ENCODE measurements at regions of chr10 and their contacts with region 1.

Region 1: DNA sequence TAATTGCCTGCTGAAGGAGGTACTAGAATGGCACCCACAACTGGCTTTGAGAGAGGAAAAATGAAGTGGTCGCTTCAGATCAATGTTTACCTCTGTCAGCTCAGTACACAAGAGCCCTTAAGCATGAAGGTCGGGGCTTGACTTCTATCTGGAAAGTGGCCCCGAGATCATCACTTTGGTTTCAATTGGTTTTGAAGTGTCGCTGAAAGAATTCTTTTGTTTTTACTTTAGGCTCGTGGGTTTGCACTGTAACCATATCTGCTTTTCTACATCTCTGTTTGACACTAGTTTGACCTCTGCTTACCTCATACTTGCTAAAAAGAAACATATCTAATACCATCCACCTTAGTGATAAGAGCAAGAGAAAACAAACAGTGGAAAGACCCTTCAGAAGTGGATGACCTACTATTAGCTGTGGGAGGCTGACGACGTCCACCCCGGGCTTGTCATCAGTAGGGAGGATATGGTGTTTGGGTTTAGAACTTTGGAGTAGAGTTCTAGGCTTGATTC is 361.8 kb downstream of the GATA3 start:
- DNase-seq: peak; percentile 29
- H3K4me3 Mint-ChIP-seq: no peak overlapping the region
- H3K27ac Mint-ChIP-seq: no peak overlapping the region
- H3K4me1 Mint-ChIP-seq: peaks cover 23% of the 10 kb centered on the region
- H3K27me3 Mint-ChIP-seq: peaks cover 2% of the 10 kb centered on the region

Region 2: DNA sequence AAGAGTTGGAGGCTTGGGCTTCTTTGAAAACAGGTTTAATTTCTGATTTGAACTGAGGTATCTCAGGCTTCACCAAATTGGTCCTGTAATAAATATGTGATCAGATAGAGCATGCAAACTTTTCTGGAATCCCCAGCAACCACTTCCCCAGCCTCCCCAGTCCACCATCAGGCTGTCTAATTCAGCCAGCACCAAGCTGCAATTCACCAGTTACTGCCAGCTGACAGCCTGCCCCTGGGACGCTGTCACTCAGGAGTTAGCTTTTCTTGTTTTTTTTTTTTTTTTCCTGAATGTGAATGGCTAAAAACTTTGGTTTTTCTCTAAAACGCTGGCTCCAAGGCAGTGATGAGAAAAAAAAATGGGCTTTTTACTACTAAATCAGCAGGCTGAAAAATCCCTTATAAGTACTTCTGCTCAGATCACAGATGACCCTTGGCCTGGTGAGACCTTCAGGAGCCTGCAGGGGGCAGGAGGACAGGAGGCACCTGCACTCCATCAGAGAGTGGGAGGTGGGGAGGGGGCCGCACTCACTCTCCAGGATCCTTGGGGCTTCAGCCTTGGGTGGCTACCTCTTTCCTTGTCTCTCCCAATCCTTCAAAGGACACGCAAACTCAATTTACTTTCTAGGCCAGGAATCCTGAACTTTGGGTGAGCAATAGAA is 12.4 kb before region 1 on chr10:
- CTCF ChIA-PET with region 1: interaction called, 11 read pairs
- POLR2A ChIA-PET with region 1: no interaction called
- DNase-seq: no peak
- H3K4me3 Mint-ChIP-seq: peak overlapping the region; percentile 72
- H3K27ac Mint-ChIP-seq: peak overlapping the region; percentile 89
- H3K4me1 Mint-ChIP-seq: peaks cover 82% of the 10 kb centered on the region
- H3K27me3 Mint-ChIP-seq: no peaks in the 10 kb centered on the region